ENCODE measurements at regions of chr9 and their contacts with region 1.

Region 1: GRCh38 chr9:36728651-36729520 is 156.2 kb downstream of the MELK start:
- DNase-seq: peak; percentile 71
- ATAC-seq: peak; percentile 73
- H3K4me3 Mint-ChIP-seq: no peak overlapping the region
- H3K27ac Mint-ChIP-seq: no peak overlapping the region
- H3K4me1 Mint-ChIP-seq: peaks cover 7% of the 10 kb centered on the region
- H3K27me3 Mint-ChIP-seq: no peaks in the 10 kb centered on the region

Region 2: DNA sequence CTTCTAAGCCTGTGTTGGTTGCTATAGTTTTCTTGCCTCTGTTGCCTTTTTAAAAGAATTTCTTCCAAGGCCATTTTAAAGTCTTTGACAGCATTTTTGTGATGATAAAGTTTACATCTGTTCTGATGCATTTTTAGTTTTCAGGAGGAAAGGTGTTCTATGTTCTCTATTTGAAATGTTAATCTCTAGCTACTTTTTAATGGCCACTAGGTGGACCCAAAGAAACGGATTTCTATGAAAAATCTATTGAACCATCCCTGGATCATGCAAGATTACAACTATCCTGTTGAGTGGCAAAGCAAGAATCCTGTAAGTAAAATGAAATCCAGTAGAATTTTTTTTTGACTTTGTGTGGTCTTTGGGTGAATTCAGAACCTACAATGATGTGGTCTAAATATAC is 96.0 kb before region 1 on chr9:
- CTCF ChIA-PET with region 1: interaction called, 16 read pairs
- DNase-seq: no peak
- ATAC-seq: no peak
- H3K4me3 Mint-ChIP-seq: no peak overlapping the region
- H3K27ac Mint-ChIP-seq: no peak overlapping the region
- H3K4me1 Mint-ChIP-seq: peaks cover 4% of the 10 kb centered on the region
- H3K27me3 Mint-ChIP-seq: no peaks in the 10 kb centered on the region

Region 3: DNA sequence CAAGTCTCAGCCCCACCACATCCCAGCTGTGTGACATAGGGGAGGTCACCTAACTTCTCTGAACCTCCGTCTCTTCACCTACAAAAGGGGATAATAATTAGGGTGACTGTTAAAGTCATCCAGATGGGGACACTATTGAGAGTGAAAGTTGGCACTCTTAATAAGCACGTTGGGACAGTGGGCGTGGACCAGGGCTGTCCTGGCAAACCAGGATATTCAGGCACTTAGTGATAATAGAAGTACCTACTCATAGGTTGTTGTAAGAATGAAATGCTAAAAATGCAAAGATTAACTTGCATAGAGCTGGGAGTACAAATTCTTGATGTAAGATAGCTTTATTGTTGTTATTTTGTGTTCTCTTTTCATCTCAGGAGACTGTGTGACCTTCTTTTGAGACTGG is 21.7 kb after region 1 on chr9:
- CTCF ChIA-PET with region 1: no interaction called
- DNase-seq: no peak
- ATAC-seq: no peak
- H3K4me3 Mint-ChIP-seq: no peak overlapping the region
- H3K27ac Mint-ChIP-seq: no peak overlapping the region
- H3K4me1 Mint-ChIP-seq: no peaks in the 10 kb centered on the region
- H3K27me3 Mint-ChIP-seq: peaks cover 46% of the 10 kb centered on the region

Region 4: GRCh38 chr9:36765468-36766341 is 36.8 kb after region 1 on chr9:
- CTCF ChIA-PET with region 1: interaction called, 10 read pairs
- DNase-seq: peak; percentile 94
- ATAC-seq: peak; percentile 99
- H3K4me3 Mint-ChIP-seq: no peak overlapping the region
- H3K27ac Mint-ChIP-seq: peak overlapping the region; percentile 33
- H3K4me1 Mint-ChIP-seq: peaks cover 1% of the 10 kb centered on the region
- H3K27me3 Mint-ChIP-seq: peaks cover 20% of the 10 kb centered on the region